Right lobe of liver (tissue), 6 donors: ENCODE measurements at regions of chr2 and their contacts with region 1.

Region 1: DNA sequence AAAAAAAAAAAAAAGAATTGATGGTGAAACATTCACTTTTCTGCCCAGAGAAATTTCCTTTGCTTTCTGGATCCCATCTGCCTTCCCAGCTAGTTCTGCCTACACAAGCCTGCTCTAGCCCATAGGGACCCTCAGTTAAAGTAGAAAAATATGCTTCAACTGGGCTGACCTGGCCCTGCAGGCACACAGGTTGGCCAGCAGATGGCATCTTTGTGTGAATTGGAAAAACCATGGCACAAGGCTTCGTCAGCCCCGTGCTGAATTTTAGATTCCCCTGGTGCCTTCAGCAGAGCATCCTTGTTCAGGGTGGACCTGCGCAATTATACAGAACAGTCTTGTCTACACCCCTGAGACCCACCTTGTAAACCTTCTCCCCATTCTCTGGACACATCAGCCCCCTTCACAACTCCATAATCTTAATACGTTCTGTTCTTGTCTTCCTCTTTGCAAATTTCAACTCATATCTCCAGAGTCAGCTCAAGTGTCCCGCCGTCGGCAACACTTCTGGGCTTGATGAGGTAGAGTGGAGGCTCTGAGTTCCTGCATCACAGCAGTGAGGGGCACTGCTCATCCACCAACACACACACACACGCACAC is 114.5 kb downstream of the INSIG2 start:
- DNase-seq: peak in 2 of 3 donors; percentile 29 to 51
- ATAC-seq: peak; percentile 79 to 91 (median 84)
- H3K4me3 ChIP-seq: no peak overlapping the region
- H3K27ac ChIP-seq: no peak overlapping the region
- H3K4me1 ChIP-seq: no peaks in the 10 kb centered on the region
- H3K27me3 ChIP-seq: no peaks in the 10 kb centered on the region
- CTCF ChIP-seq: peak; percentile 70 to 88 (median 84)
- POLR2A ChIP-seq: no peak

Region 2: DNA sequence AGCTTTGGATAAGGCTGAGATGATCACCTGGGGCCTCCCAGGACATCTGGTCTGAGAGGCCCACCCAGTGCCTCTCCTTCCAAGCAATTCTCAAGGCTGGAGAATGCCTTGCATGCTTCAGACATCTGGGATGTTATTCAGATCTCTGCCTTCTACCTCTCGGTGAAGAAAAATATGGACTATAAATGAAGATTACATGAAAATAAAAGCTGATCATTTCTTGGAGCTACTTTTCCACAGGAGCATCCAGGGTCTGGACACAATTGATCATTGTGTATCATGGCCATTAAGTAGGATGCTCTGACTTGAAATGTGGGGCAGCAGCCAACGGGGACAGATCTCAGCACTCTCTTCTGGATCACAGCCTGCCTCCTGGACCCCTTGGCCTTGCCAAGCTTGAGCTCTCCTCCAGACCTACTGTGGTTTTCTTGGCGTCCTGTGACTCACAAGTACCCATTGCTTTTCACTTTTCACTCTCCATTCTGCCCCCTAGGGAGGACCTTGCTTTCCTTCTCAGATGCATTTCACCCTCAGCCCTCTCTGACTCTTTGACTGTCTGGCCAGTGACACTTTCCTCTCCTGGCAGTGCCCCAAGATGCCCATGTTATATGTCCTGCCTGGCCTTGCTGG is 88.6 kb after region 1 on chr2:
- intact Hi-C with region 1: no loop called
- DNase-seq: no peak
- ATAC-seq: no peak
- H3K4me3 ChIP-seq: no peak overlapping the region
- H3K27ac ChIP-seq: no peak overlapping the region
- H3K4me1 ChIP-seq: no peaks in the 10 kb centered on the region
- H3K27me3 ChIP-seq: no peaks in the 10 kb centered on the region
- CTCF ChIP-seq: no peak
- POLR2A ChIP-seq: no peak

Region 3: GRCh38 chr2:118855451-118856279 is 652.9 kb after region 1 on chr2:
- intact Hi-C with region 1: loop called in 1 of 2 experiments (anchors 10 kb)
- DNase-seq: peak; percentile 81 to 86 (median 83)
- ATAC-seq: peak; percentile 93 to 98 (median 96)
- H3K4me3 ChIP-seq: peak overlapping the region; percentile 3 to 41 (median 27)
- H3K27ac ChIP-seq: no peak overlapping the region
- H3K4me1 ChIP-seq: peaks cover 0 to 11% (median 4%) of the 10 kb centered on the region in 4 donors
- H3K27me3 ChIP-seq: peaks cover 31 to 60% of the 10 kb centered on the region in 2 donors
- CTCF ChIP-seq: peak; percentile 92 to 95 (median 94)
- POLR2A ChIP-seq: no peak